Transverse colon (tissue), 4 donors: ENCODE measurements at regions of chr11 and their contacts with region 1.

Region 1: GRCh38 chr11:9757809-9758636 is 94.1 kb downstream of the SWAP70 start:
- DNase-seq: peak; percentile 92
- H3K4me3 ChIP-seq: peak overlapping the region; percentile 47 to 73 (median 60)
- H3K27ac ChIP-seq: peak overlapping the region; percentile 86 to 94 (median 91)
- H3K4me1 ChIP-seq: peaks cover 20 to 40% (median 28%) of the 10 kb centered on the region in 4 donors
- H3K27me3 ChIP-seq: no peaks in the 10 kb centered on the region
- CTCF ChIP-seq: peak; percentile 37 to 87 (median 77)
- EP300 ChIP-seq: no peak
- POLR2A ChIP-seq: peak; percentile 44

Region 2: DNA sequence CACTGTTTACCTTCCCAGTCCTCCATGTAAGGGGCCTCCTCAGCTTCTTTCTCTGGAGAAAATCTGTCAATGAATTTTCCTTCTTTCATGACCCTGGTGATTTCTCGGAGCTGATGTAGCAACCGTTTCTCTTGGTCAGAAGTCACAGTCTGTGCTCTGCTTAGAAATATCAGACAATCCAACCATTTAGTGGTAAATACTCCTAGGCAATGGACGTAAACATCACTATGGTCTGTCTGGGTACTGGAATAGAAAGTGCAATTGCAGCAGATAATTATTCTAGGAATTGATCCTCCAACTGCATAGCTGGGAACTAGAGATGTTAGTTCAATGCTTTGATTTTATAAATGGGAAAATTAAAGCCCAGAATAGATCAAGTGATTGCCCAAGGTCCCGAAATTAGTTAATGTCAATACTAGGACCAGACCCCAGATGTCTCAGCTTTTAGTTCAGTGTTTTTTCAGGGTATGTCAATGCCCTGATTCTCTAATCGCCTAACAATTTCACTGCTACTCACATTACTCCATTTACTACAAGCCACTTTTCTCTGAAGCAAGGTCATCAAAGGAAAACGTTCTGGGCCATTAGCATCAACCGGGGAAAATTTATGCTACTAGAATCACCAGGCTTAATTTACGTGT is 1631.3 kb before region 1 on chr11:
- in situ Hi-C with region 1: no loop called
- intact Hi-C with region 1: no loop called
- DNase-seq: no peak
- H3K4me3 ChIP-seq: no peak overlapping the region
- H3K27ac ChIP-seq: no peak overlapping the region
- H3K4me1 ChIP-seq: no peaks in the 10 kb centered on the region
- H3K27me3 ChIP-seq: no peaks in the 10 kb centered on the region
- CTCF ChIP-seq: no peak
- EP300 ChIP-seq: no peak
- POLR2A ChIP-seq: no peak

Region 3: GRCh38 chr11:9534791-9535781 is 222.9 kb before region 1 on chr11:
- in situ Hi-C with region 1: loop called in 1 of 4 experiments (anchors 10 kb)
- intact Hi-C with region 1: no loop called
- DNase-seq: peak; percentile 83
- H3K4me3 ChIP-seq: no peak overlapping the region
- H3K27ac ChIP-seq: no peak overlapping the region
- H3K4me1 ChIP-seq: peaks cover 2 to 13% (median 5%) of the 10 kb centered on the region in 4 donors
- H3K27me3 ChIP-seq: no peaks in the 10 kb centered on the region
- CTCF ChIP-seq: peak; percentile 76 to 84 (median 79)
- EP300 ChIP-seq: no peak
- POLR2A ChIP-seq: no peak

Region 4: GRCh38 chr11:9972989-9973388 is 215.0 kb after region 1 on chr11:
- in situ Hi-C with region 1: loop called (anchors 10 to 25 kb)
- intact Hi-C with region 1: loop called (anchors 5 kb)
- DNase-seq: no peak
- H3K4me3 ChIP-seq: no peak overlapping the region
- H3K27ac ChIP-seq: no peak overlapping the region
- H3K4me1 ChIP-seq: no peaks in the 10 kb centered on the region
- H3K27me3 ChIP-seq: no peaks in the 10 kb centered on the region
- CTCF ChIP-seq: peak; percentile 63 to 65 (median 64)
- EP300 ChIP-seq: no peak
- POLR2A ChIP-seq: no peak

Region 5: GRCh38 chr11:10314199-10315072 is 556.4 kb after region 1 on chr11:
- in situ Hi-C with region 1: loop called in 3 of 4 experiments (anchors 10 to 25 kb)
- intact Hi-C with region 1: no loop called
- DNase-seq: no peak
- H3K4me3 ChIP-seq: no peak overlapping the region
- H3K27ac ChIP-seq: no peak overlapping the region
- H3K4me1 ChIP-seq: peaks cover 0 to 22% (median 8%) of the 10 kb centered on the region in 4 donors
- H3K27me3 ChIP-seq: no peaks in the 10 kb centered on the region
- CTCF ChIP-seq: no peak
- EP300 ChIP-seq: no peak
- POLR2A ChIP-seq: no peak

Region 6: DNA sequence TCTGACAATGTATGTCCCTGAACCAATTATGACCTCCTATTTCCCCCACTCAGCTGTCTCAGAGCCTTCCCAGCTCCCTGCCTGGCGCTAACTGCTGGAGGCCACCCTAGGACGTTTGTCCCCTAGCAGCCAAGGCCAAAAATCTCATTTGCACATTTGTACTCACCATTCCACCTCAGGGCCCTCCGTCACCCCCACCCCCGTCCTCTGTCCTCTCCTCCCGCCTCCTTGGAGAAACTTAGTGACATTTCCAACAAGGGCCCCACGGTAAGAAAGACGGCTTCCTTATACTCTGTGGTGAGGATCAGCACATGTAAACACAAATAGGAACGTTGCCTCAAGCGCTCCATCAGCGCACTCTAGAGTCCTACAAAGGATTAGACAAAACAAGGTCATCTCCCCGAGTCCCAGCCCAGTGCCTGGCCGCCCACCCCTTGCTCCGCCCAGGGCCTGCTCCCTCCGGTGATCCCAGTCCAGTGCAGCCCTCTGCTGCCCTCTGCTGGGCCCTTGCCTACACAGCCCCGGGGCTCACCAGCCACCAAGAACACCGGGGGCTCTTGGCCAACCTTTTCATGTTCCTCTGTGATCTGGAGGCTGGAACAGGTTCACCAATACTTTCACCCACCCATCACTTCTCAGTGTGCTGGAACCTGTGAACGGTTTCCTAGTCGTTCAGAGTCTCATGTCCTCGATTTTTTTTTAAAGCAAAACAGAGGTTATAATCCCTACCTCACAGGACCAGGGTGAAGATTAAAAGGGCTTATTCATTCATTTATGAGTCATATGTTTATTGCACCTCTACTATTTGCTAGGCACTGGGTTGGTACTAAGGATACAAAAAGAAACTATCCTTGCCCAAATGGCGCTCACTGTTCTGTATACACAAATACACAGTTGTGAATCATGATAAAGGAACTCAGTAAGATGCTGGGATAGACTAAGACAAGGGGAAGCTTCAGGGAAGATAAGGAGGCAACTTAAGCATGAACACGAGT is 977.8 kb after region 1 on chr11:
- in situ Hi-C with region 1: loop called in 1 of 4 experiments (anchors 25 kb)
- intact Hi-C with region 1: no loop called
- DNase-seq: peak; percentile 94
- H3K4me3 ChIP-seq: peak overlapping the region in 2 of 4 donors; percentile 6 to 8
- H3K27ac ChIP-seq: peak overlapping the region; percentile 59 to 73 (median 67)
- H3K4me1 ChIP-seq: peaks cover 5 to 16% (median 11%) of the 10 kb centered on the region in 4 donors
- H3K27me3 ChIP-seq: no peaks in the 10 kb centered on the region
- CTCF ChIP-seq: peak; percentile 96 to 99 (median 98)
- EP300 ChIP-seq: no peak
- POLR2A ChIP-seq: no peak